Activated naive CD8-positive, alpha-beta T cell treated with anti-CD3 and anti-CD28 coated beads, Interleukin-2, amount 10 ng/mL, durations not matched to agents 7 days and 5 days (primary cell): ENCODE measurements at regions of chr4 and their contacts with region 1.

Region 1: GRCh38 chr4:25376754-25377571 is at the start of gene ANAPC4:
- DNase-seq: peak; percentile 98
- ATAC-seq: peak; percentile 94
- H3K4me3 Mint-ChIP-seq: no peak within 1 kb of the TSS
- H3K27ac Mint-ChIP-seq: peak within 1 kb of the TSS; percentile 93
- H3K4me1 Mint-ChIP-seq: peaks cover 8% of the 10 kb centered on the region
- H3K27me3 Mint-ChIP-seq: no peaks in the 10 kb centered on the region
- total RNA-seq, gene ANAPC4: 49.8 to 52.8 TPM

Region 2: GRCh38 chr4:25234390-25235370 is 142.3 kb before region 1 on chr4:
- POLR2A ChIA-PET with region 1: interaction called, 12 read pairs
- DNase-seq: no peak
- ATAC-seq: peak; percentile 28
- H3K4me3 Mint-ChIP-seq: peak overlapping the region; percentile 93
- H3K27ac Mint-ChIP-seq: peak overlapping the region; percentile 95
- H3K4me1 Mint-ChIP-seq: peaks cover 33% of the 10 kb centered on the region
- H3K27me3 Mint-ChIP-seq: no peaks in the 10 kb centered on the region